Caco-2 (cell line): ENCODE measurements at regions of chr7 and their contacts with region 1.

Region 1: GRCh38 chr7:96303686-96304443 is 18.0 kb downstream of the SLC25A13 start:
- DNase-seq: no peak
- H3K4me3 ChIP-seq: no peak overlapping the region
- H3K4me3 Mint-ChIP-seq: peak overlapping the region; percentile 40
- H3K27ac Mint-ChIP-seq: peak overlapping the region; percentile 72
- H3K4me1 ChIP-seq: peaks cover 70% of the 10 kb centered on the region
- H3K4me1 Mint-ChIP-seq: peaks cover 47% of the 10 kb centered on the region
- H3K27me3 ChIP-seq: no peaks in the 10 kb centered on the region
- H3K27me3 Mint-ChIP-seq: no peaks in the 10 kb centered on the region
- CTCF ChIP-seq: no peak

Region 2: DNA sequence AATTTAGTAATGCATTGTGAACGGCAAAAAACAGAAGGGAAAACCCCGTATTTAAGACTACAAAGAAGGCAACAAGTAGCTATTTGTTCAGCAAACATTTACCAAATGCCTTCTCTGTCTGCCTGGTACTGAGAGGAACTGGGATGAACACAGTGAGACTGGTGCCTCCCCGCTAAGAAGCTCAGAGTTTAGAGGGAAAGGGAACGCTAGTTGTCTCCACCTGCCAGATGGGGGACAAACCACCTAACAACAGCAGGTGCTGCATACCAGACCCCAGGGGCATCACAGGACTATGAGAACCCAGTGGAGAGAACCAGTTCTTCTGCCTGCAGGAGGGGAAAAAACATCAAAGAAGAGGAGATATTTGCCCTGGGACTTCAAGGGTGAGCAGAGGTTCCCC is 129.1 kb before region 1 on chr7:
- CTCF ChIA-PET with region 1: no interaction called
- POLR2A ChIA-PET with region 1: no interaction called
- intact Hi-C with region 1: loop called (anchors 1 kb)
- DNase-seq: peak; percentile 84 to 85
- H3K4me3 ChIP-seq: no peak overlapping the region
- H3K4me3 Mint-ChIP-seq: peak overlapping the region; percentile 34
- H3K27ac Mint-ChIP-seq: peak overlapping the region; percentile 82
- H3K4me1 ChIP-seq: peaks cover 73% of the 10 kb centered on the region
- H3K4me1 Mint-ChIP-seq: peaks cover 54% of the 10 kb centered on the region
- H3K27me3 ChIP-seq: no peaks in the 10 kb centered on the region
- H3K27me3 Mint-ChIP-seq: no peaks in the 10 kb centered on the region
- CTCF ChIP-seq: peak in 1 of 2 experiments; percentile 14

Region 3: GRCh38 chr7:96331236-96331635 is 27.4 kb after region 1 on chr7:
- CTCF ChIA-PET with region 1: interaction called, 3 read pairs
- POLR2A ChIA-PET with region 1: no interaction called
- intact Hi-C with region 1: loop called (anchors 1 kb)
- DNase-seq: peak; percentile 52 to 70
- H3K4me3 ChIP-seq: no peak overlapping the region
- H3K4me3 Mint-ChIP-seq: no peak overlapping the region
- H3K27ac Mint-ChIP-seq: no peak overlapping the region
- H3K4me1 ChIP-seq: peaks cover 25% of the 10 kb centered on the region
- H3K4me1 Mint-ChIP-seq: peaks cover 25% of the 10 kb centered on the region
- H3K27me3 ChIP-seq: no peaks in the 10 kb centered on the region
- H3K27me3 Mint-ChIP-seq: no peaks in the 10 kb centered on the region
- CTCF ChIP-seq: no peak

Region 4: DNA sequence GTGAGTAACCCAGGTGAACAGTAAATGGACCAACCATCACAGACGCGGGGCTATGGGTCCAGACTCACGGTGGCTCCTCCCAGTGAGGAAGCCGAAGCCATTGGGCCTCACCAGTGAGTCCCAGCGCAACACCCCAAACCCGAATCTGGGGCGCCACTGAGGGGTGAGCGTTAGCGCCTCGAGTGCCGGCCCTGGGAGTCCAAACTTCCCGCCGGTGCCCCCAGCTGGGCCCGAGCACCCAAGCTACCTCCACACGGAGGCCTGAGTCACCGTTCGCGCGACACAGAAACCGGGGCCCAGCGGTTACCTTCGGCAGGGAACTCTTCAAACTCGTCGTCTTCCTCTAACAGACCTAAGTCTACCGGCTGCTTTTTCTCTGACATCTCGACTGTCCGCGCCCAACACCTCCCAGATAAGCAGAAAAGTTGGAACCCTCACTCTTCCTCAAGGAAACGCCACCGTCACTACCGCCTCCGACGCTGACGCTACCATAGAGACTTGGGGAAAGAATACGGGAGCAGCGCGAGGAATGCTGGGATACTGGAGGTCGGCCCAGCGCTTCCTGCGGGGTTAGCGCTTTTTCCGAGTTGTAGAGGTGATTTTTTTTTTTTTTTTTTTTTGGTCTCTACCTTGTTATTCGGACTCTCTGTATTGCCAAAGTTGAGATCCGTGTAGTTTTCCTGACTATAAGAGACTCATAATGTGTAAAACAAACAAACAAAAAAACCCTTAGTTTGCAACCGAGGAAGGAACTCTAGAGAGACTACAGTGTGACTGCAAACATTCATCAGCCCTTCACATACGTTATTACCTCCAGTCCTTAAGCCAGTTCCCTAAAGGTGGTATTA is 405.7 kb after region 1 on chr7 and contains the start of gene SEM1:
- CTCF ChIA-PET with region 1: no interaction called
- POLR2A ChIA-PET with region 1: no interaction called
- intact Hi-C with region 1: loop called (anchors 1 kb)
- DNase-seq: peak; percentile 81 to 86
- H3K4me3 ChIP-seq: peak within 1 kb of the TSS; percentile 78
- H3K4me3 Mint-ChIP-seq: peak within 1 kb of the TSS; percentile 88
- H3K27ac Mint-ChIP-seq: peak within 1 kb of the TSS; percentile 98
- H3K4me1 ChIP-seq: peaks cover 11% of the 10 kb centered on the region
- H3K4me1 Mint-ChIP-seq: no peaks in the 10 kb centered on the region
- H3K27me3 ChIP-seq: no peaks in the 10 kb centered on the region
- H3K27me3 Mint-ChIP-seq: no peaks in the 10 kb centered on the region
- CTCF ChIP-seq: no peak
- total RNA-seq, gene SEM1: 116 and 123 TPM in 2 replicates

Region 5: DNA sequence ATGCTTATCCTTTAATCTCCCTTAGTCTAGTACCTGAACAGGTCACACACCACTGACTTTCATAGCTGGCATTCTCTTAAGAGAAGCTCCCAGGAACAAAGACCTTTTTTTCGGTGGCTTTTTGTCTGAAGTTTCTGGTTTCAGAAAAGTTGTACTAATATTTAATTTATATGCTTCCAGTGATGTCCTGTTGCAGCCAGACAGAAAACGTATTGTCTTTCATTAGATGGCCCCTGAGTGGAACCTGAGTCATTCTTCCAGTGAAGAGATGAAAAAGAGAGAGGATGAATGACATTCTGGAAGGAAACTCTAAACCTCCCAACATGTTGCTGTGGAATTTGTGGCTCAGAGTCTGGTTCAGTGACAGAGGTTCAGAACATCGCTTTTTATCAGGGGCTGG is 1153.2 kb after region 1 on chr7:
- CTCF ChIA-PET with region 1: no interaction called
- POLR2A ChIA-PET with region 1: no interaction called
- intact Hi-C with region 1: no loop called
- DNase-seq: no peak
- H3K4me3 ChIP-seq: no peak overlapping the region
- H3K4me3 Mint-ChIP-seq: no peak overlapping the region
- H3K27ac Mint-ChIP-seq: no peak overlapping the region
- H3K4me1 ChIP-seq: no peaks in the 10 kb centered on the region
- H3K4me1 Mint-ChIP-seq: no peaks in the 10 kb centered on the region
- H3K27me3 ChIP-seq: no peaks in the 10 kb centered on the region
- H3K27me3 Mint-ChIP-seq: no peaks in the 10 kb centered on the region
- CTCF ChIP-seq: no peak